ENCODE measurements at regions of chr6 and their contacts with region 1.

Region 1: DNA sequence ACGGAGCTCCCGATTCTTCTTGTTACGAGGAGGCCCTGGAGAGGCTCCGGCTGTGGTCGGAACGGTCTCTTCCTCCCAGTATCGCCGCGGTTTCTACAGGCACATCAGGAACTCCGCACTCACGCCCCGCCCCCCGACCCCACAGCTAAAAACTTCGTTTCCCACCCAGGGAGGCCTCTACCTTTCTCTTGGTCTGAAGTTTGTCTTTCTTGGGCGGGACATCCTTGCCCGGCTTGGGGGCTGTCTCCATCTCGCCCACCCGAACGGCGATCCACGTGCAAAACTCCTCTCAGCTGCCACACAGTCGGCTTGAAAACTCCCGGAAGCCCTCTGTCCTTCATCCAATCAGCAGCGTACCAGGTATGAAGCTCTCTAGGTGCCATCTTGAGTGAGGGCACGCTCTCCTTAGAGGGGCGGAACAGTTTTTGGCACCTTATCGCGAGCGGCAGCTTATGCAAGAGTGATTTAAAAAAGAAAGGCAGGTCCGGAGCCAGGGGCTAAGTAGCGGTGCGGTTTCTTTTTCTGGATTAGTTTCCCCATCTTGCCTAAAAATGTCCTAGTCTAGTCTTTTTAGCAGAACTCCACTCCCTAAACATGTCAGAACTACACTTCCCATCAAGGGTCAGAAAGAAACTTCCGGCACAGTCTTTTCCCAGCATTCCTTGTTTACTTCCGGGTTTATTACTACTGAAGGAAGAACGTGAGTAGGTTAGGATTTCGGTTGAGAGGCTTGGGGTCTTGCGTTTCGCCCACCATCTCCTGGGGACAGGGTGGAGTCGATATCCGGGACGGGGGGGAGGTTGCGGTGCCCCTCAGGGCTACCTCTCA is at the starts of genes PFDN6 and WDR46:
- DNase-seq: peak; percentile 62 to 92 (median 76)
- ATAC-seq: peak; percentile 97
- H3K4me3 ChIP-seq: peak within 1 kb of the TSS; percentile 80
- H3K4me3 Mint-ChIP-seq: peak within 1 kb of the TSS; percentile 97
- H3K27ac ChIP-seq: peak within 1 kb of the TSS; percentile 71 to 83
- H3K27ac Mint-ChIP-seq: peak within 1 kb of the TSS; percentile 83
- H3K4me1 ChIP-seq: peaks cover 39% of the 10 kb centered on the region
- H3K4me1 Mint-ChIP-seq: peaks cover 45% of the 10 kb centered on the region
- H3K27me3 ChIP-seq: no peaks in the 10 kb centered on the region
- H3K27me3 Mint-ChIP-seq: no peaks in the 10 kb centered on the region
- CTCF ChIP-seq: no peak
- total RNA-seq, gene PFDN6: 9.7 to 11.7 TPM
- total RNA-seq, gene WDR46: 13.6 to 15.8 TPM

Region 2: DNA sequence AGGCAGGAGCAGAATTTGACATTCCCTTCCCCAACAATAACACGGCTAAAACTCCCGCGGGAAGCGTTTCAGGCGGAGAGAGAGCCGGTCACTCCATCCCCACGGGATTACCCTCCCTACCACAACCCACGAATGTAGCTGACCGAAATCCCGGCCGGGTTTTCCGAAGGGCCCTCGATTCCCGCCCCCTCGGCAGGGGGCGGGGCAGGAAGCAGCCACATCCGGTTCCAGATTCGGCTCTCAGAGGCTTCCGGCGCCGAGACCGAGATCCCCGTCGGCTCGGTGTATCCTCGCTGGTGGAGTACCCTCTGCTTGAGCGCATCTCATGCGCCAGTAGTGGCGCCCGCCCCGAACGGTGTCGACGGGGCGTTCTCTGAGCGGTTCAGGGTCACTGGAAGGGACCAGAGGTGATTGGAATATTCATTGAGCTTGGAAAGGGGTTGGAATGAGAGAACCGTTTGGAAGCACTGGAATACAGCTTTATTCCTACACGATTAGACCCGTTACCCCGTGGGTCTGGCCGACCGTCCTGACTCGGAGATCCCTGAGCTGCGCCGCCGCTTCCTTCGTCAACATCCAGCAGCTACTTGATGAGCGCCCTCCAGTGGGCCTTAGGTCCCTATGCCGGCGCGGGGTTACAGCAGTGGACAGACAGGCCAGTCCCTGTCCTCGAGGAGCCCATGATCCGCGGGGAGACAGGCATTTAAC is 10.3 kb after region 1 on chr6:
- CTCF ChIA-PET with region 1: interaction called, 4 read pairs
- POLR2A ChIA-PET with region 1: interaction called, 75 read pairs
- intact Hi-C with region 1: loop called (anchors 1 kb)
- DNase-seq: peak; percentile 89 to 97 (median 92)
- ATAC-seq: peak; percentile 84
- H3K4me3 ChIP-seq: peak overlapping the region; percentile 91
- H3K4me3 Mint-ChIP-seq: peak overlapping the region; percentile 98
- H3K27ac ChIP-seq: peak overlapping the region; percentile 90 to 96
- H3K27ac Mint-ChIP-seq: peak overlapping the region; percentile 99
- H3K4me1 ChIP-seq: peaks cover 34% of the 10 kb centered on the region
- H3K4me1 Mint-ChIP-seq: peaks cover 32% of the 10 kb centered on the region
- H3K27me3 ChIP-seq: no peaks in the 10 kb centered on the region
- H3K27me3 Mint-ChIP-seq: no peaks in the 10 kb centered on the region
- CTCF ChIP-seq: peak; percentile 74